ENCODE measurements at regions of chr6 and their contacts with region 1.

Region 1: DNA sequence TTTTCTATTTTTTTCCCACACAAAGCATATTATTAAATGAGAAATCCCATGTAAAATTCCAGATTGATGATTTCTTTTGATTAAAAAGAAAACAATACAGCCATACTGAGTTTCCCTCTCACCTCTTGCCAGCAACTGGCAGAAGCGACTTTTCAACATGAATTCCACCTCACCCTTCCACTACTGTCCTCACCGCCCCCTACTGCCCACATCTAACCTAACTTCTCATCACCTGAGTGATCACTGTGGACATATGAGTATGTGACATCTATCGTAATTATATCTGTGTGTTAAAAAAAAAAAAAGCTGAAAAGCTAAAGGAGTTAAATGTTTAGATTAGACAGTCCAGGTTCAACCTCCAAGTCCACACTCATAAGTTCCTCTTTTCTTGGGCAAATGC is 528.6 kb downstream of the PRKN start:
- DNase-seq: peak; percentile 3
- ATAC-seq: peak; percentile 65; the same call in 2 of the 3 replicates
- H3K4me3 ChIP-seq: no peak overlapping the region
- H3K27ac ChIP-seq: no peak overlapping the region
- H3K4me1 ChIP-seq: no peaks in the 10 kb centered on the region
- H3K27me3 ChIP-seq: 0 out of 5 replicates have a peak, but pooled peaks cover 0 to 1% of the 10 kb centered on the region in 2 experiments
- CTCF ChIP-seq: peak; percentile 34
- EP300 ChIP-seq: no peak
- POLR2A ChIP-seq: no peak
- RAD21 ChIP-seq: no peak

Region 2: GRCh38 chr6:161826512-161826911 is 372.4 kb before region 1 on chr6:
- CTCF ChIA-PET with region 1: no interaction called
- POLR2A ChIA-PET with region 1: no interaction called
- in situ Hi-C with region 1: no loop called
- intact Hi-C with region 1: no loop called
- DNase-seq: no peak
- ATAC-seq: no peak
- H3K4me3 ChIP-seq: no peak overlapping the region
- H3K27ac ChIP-seq: no peak overlapping the region
- H3K4me1 ChIP-seq: no peaks in the 10 kb centered on the region
- H3K27me3 ChIP-seq: peaks cover 0 to 11% of the 10 kb centered on the region in 2 experiments; a peak in 2 of 5 replicates
- CTCF ChIP-seq: no peak
- EP300 ChIP-seq: no peak
- POLR2A ChIP-seq: no peak
- RAD21 ChIP-seq: no peak

Region 3: GRCh38 chr6:161836643-161837448 is 362.1 kb before region 1 on chr6:
- CTCF ChIA-PET with region 1: no interaction called
- POLR2A ChIA-PET with region 1: no interaction called
- in situ Hi-C with region 1: no loop called
- intact Hi-C with region 1: loop called (anchors 1 kb)
- DNase-seq: peak; percentile 35
- ATAC-seq: no peak
- H3K4me3 ChIP-seq: no peak overlapping the region
- H3K27ac ChIP-seq: no peak overlapping the region
- H3K4me1 ChIP-seq: peaks cover 23% of the 10 kb centered on the region
- H3K27me3 ChIP-seq: peaks cover 0 to 6% of the 10 kb centered on the region in 2 experiments; a peak in 2 of 5 replicates
- CTCF ChIP-seq: peak; percentile 56
- EP300 ChIP-seq: no peak
- POLR2A ChIP-seq: no peak
- RAD21 ChIP-seq: peak; percentile 56; the same call in 1 of the 2 replicates

Measured in HepG2 (cell line).